ENCODE measurements at regions of chr1 and their contacts with region 1.

Region 1: DNA sequence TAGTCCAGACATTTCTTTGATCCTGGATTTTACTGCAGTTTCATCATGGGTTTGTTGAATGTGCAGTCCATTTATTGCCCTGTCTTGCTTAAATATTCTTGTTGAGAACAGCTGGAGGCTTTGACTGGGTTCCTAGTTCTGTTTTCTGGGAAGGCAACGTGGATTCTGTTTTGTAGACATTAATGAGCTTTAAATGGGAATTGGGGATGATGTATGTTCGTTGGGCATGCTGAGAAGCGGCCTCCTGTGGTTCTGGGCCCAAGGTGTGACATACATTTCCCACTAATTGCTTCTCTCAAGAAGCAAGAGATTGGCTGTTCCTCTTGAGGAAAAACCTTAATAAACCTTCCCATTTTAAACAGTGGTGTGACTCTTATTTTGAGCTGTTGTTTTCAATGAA is 22.9 kb downstream of the INKA2 start:
- DNase-seq: no peak
- ATAC-seq: no peak

Region 2: GRCh38 chr1:111747282-111747734 is 31.0 kb after region 1 on chr1:
- intact Hi-C with region 1: loop called (anchors 2 kb)
- DNase-seq: no peak
- ATAC-seq: peak; percentile 44

Region 3: DNA sequence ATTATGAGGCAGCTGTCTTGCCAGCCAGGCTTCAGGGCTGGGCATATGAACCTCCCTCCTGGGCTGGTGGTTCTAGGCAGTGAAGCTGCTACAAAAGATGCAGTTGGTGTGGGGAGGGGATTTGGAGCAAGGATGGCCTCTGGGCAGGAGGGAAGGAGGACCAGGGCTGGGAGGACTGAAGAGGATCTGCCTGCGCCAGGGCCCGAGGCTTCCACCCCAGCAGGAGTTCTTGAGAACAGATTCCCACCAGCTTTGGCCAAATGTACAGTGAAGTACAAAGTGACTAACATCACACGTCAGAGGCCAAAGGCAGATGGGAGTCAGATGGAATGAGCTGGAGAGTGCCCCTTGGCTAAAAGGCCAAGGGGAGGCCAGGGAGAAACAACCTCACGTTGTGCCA is 101.7 kb after region 1 on chr1:
- intact Hi-C with region 1: no loop called
- DNase-seq: no peak
- ATAC-seq: no peak

Region 4: GRCh38 chr1:112337028-112337531 is 620.7 kb after region 1 on chr1:
- intact Hi-C with region 1: no loop called
- DNase-seq: peak; percentile 63
- ATAC-seq: peak; percentile 94

Measured in Right ventricle myocardium superior (tissue), 1 donor.